ENCODE measurements at regions of chr19 and their contacts with region 1.

Region 1: GRCh38 chr19:44741841-44742352 is 6.6 kb upstream of the BCL3 start:
- DNase-seq: peak; percentile 98
- ATAC-seq: peak; percentile 83
- H3K4me3 ChIP-seq: peak overlapping the region; percentile 13 to 44
- H3K27ac ChIP-seq: peak overlapping the region; percentile 95
- H3K4me1 ChIP-seq: peaks cover 88 to 96% of the 10 kb centered on the region in 2 experiments
- H3K27me3 ChIP-seq: no peaks in the 10 kb centered on the region
- CTCF ChIP-seq: no peak
- POLR2A ChIP-seq: peak; percentile 33
- RAD21 ChIP-seq: no peak; the same call in 1 of the 2 replicates

Region 2: GRCh38 chr19:44626048-44626624 is 115.8 kb before region 1 on chr19:
- CTCF ChIA-PET with region 1: no interaction called
- POLR2A ChIA-PET with region 1: no interaction called
- RAD21 ChIA-PET with region 1: no interaction called
- intact Hi-C with region 1: no loop called
- DNase-seq: peak; percentile 66
- ATAC-seq: peak; percentile 88
- H3K4me3 ChIP-seq: peak overlapping the region in 1 of 2 experiments; percentile 25; a peak in 2 of 4 replicates
- H3K27ac ChIP-seq: peak overlapping the region; percentile 55; the same call in 1 of the 2 replicates
- H3K4me1 ChIP-seq: peaks cover 13 to 29% of the 10 kb centered on the region in 2 experiments
- H3K27me3 ChIP-seq: no peaks in the 10 kb centered on the region
- CTCF ChIP-seq: no peak
- POLR2A ChIP-seq: no peak
- RAD21 ChIP-seq: no peak

Region 3: GRCh38 chr19:44640518-44640917 is 101.4 kb before region 1 on chr19:
- CTCF ChIA-PET with region 1: no interaction called
- POLR2A ChIA-PET with region 1: no interaction called
- RAD21 ChIA-PET with region 1: no interaction called
- intact Hi-C with region 1: no loop called
- DNase-seq: no peak
- ATAC-seq: no peak
- H3K4me3 ChIP-seq: no peak overlapping the region
- H3K27ac ChIP-seq: no peak overlapping the region
- H3K4me1 ChIP-seq: peaks cover 4 to 30% of the 10 kb centered on the region in 2 experiments
- H3K27me3 ChIP-seq: no peaks in the 10 kb centered on the region
- CTCF ChIP-seq: no peak
- POLR2A ChIP-seq: no peak
- RAD21 ChIP-seq: no peak

Region 4: DNA sequence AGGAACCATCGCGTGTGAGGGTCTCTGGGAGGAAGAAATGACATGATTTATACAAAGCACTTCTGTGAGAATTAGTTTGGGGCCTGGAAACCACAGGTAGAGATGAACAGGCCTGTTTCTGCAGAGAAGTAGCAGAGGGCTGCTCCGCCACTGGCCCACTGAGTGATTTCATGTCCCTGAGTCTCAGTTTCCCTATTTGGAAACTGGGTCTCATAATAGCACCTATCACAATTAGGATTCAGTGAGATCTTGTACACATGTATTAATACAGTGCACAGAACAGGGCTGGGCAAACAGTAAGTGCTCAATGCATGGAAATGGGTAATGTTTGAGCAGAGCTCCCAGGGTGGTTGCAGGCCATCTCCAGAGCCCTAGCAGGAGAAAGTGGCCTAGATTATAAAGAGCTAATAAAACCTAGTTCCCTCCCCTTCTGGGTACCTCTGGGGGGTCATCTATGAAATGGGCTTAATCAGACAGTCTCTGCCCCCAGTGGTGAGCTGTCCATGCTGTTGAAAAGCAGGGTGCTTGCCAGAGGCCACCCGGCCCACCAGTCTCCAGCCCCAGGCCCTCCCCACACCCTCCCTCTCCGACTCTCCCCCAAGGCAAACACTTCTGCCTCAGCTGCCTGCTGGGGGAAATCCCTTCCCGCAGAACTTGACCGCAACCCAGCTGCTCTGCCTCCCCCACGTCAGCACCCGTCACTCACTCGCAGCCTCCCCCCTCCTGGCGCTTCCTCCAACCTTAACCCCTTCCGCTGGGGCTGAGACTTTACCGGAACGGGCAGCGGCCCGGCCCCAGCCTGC is 11.1 kb after region 1 on chr19:
- CTCF ChIA-PET with region 1: no interaction called
- POLR2A ChIA-PET with region 1: interaction called, 36 read pairs
- RAD21 ChIA-PET with region 1: interaction called, 3 to 10 read pairs
- intact Hi-C with region 1: no loop called
- DNase-seq: no peak
- ATAC-seq: peak; percentile 67
- H3K4me3 ChIP-seq: peak overlapping the region; percentile 50 to 70
- H3K27ac ChIP-seq: peak overlapping the region; percentile 95
- H3K4me1 ChIP-seq: peaks cover 35 to 68% of the 10 kb centered on the region in 2 experiments
- H3K27me3 ChIP-seq: no peaks in the 10 kb centered on the region
- CTCF ChIP-seq: peak in 2 of 3 experiments; percentile 15 to 19; a peak in 2 of 6 replicates
- POLR2A ChIP-seq: no peak
- RAD21 ChIP-seq: no peak

Region 5: DNA sequence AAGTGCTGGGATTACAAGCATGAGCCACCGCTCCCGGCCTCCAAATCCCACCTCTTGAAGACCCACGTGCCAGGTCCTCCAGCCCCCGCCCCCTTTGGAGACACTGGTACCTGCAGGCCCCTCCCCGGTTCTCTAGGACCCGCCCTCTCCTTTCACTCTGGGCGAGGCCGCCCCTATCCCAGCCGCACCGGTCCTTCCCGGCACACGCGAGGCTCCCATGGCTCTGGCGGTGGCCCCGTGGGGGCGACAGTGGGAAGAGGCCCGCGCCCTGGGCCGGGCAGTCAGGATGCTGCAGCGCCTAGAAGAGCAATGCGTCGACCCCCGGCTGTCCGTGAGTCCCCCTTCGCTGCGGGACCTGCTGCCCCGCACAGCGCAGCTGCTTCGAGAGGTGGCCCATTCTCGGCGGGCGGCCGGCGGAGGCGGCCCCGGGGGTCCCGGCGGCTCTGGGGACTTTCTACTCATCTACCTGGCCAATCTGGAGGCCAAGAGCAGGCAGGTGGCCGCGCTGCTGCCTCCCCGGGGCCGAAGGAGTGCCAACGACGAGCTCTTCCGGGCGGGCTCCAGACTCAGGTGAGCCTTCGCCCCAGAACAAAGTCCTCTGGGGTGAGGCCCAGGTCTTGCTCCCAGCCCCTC is 35.9 kb after region 1 on chr19 and contains the start of gene CBLC:
- CTCF ChIA-PET with region 1: no interaction called
- POLR2A ChIA-PET with region 1: interaction called, 6 read pairs
- RAD21 ChIA-PET with region 1: no interaction called
- intact Hi-C with region 1: loop called (anchors 5 kb)
- DNase-seq: peak; percentile 94
- ATAC-seq: peak; percentile 90
- H3K4me3 ChIP-seq: peak within 1 kb of the TSS; percentile 75 to 96
- H3K27ac ChIP-seq: peak within 1 kb of the TSS; percentile 90
- H3K4me1 ChIP-seq: peaks cover 51 to 69% of the 10 kb centered on the region in 2 experiments
- H3K27me3 ChIP-seq: no peaks in the 10 kb centered on the region
- CTCF ChIP-seq: peak in 2 of 3 experiments; percentile 17 to 20; a peak in 2 of 6 replicates
- POLR2A ChIP-seq: peak; percentile 49
- RAD21 ChIP-seq: no peak
- total RNA-seq, gene CBLC: 54.3 TPM

Measured in HCT116 (cell line).